Kidney (tissue), 22 donors: ENCODE measurements at regions of chr15 and their contacts with region 1.

Region 1: DNA sequence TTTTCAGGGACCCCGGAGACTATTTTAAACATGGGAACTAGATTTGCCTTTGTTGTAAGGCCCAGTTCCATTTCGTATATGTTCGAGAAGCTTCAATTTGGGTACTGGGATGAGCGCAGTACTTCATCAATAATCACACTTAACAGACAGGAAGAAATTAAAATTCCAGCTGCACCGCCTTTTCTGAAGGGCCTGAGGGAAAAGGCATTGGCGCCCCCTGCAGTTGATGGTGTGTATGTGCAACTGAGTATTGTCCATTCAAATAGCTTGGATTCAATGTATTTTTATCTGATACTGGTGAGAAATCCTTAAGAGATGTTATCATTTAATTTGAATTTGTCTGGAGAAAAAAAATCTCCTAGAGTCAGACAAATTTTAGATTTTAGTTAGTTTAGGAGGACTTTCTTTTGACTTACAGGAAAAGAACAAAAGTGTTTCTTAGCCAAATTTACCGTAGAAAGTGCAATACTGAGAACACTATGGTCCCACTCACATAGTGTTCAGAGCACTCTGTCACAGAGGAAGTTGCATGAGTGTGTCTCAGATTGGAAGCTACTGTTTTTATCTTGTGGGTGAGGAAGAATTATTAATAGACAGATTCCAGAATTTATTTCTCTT is 5.4 kb upstream of the ALDH1A2 start:
- DNase-seq: peak; percentile 66 to 89 (median 73)
- H3K4me3 ChIP-seq: no peak overlapping the region
- H3K27ac ChIP-seq: no peak overlapping the region
- H3K4me1 ChIP-seq: peaks cover 0 to 2% (median 0%) of the 10 kb centered on the region in 3 donors
- H3K27me3 ChIP-seq: no peaks in the 10 kb centered on the region
- CTCF ChIP-seq: peak; percentile 83

Region 2: GRCh38 chr15:57647791-57648130 is 423.1 kb before region 1 on chr15:
- intact Hi-C with region 1: no loop called
- DNase-seq: peak; percentile 65 to 88 (median 67)
- H3K4me3 ChIP-seq: no peak overlapping the region
- H3K27ac ChIP-seq: peak overlapping the region; percentile 29 to 37
- H3K4me1 ChIP-seq: peaks cover 3 to 8% (median 5%) of the 10 kb centered on the region in 3 donors
- H3K27me3 ChIP-seq: no peaks in the 10 kb centered on the region
- CTCF ChIP-seq: no peak

Region 3: DNA sequence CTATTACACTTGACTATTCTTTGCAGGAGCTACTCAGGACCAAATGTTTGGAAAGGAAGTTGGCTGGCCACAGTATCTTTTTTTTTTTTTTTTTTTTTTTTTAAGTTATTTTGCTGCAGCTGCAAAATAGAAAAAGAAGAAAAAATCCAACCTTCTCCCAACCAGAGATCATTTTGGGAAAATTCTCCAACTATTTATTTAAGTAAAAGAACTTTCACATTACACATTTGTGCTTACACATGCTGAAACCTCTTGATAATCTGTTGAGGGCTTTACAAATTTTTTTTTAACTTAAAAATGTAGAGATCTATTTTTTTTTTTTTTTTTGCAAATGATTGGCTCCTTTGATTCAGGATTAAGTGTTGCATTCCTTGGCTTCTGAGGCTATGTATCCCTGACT is 216.4 kb before region 1 on chr15:
- intact Hi-C with region 1: no loop called
- DNase-seq: no peak
- H3K4me3 ChIP-seq: no peak overlapping the region
- H3K27ac ChIP-seq: no peak overlapping the region
- H3K4me1 ChIP-seq: no peaks in the 10 kb centered on the region
- H3K27me3 ChIP-seq: no peaks in the 10 kb centered on the region
- CTCF ChIP-seq: no peak

Region 4: GRCh38 chr15:57866149-57866736 is 204.7 kb before region 1 on chr15:
- intact Hi-C with region 1: loop called (anchors 10 kb)
- DNase-seq: peak in 4 of 5 donors; percentile 29 to 79 (median 62)
- H3K4me3 ChIP-seq: no peak overlapping the region
- H3K27ac ChIP-seq: no peak overlapping the region
- H3K4me1 ChIP-seq: no peaks in the 10 kb centered on the region
- H3K27me3 ChIP-seq: no peaks in the 10 kb centered on the region
- CTCF ChIP-seq: peak; percentile 58

Region 5: DNA sequence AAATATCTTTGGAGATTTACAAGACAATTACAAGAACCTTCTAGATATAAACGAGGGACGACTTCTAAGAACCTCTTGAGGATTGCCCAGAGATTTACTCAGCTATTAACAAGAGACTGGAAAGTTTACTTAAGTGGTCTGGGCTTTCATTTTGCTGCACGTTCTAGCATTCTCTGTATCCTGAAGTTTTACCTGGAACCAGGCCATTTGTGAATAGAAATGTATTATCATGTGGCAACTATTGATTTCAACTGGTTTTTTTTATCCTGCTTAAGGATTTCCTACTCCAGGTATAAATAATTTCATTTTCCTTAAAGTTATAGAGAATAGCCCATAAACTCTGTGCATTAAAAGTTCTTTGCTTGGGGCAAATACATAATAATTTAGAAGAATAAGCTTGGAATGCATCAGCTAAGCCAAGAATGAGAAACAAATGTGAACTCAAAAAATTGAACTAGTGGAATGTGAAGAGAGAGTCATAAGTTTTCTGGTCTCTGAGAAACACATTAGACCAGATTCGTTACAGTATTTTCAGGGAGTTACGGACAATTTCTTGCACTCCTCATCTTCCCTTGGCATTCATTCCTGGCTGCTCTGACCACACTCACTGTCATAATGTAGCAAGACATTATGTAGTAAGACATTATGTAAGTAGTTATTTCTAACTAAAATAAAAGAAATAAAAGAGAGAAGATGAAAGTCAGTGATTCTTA is 68.5 kb after region 1 on chr15:
- intact Hi-C with region 1: loop called (anchors 10 kb)
- DNase-seq: no peak
- H3K4me3 ChIP-seq: no peak overlapping the region
- H3K27ac ChIP-seq: no peak overlapping the region
- H3K4me1 ChIP-seq: no peaks in the 10 kb centered on the region
- H3K27me3 ChIP-seq: no peaks in the 10 kb centered on the region
- CTCF ChIP-seq: no peak

Region 6: GRCh38 chr15:58182460-58183163 is 111.7 kb after region 1 on chr15:
- intact Hi-C with region 1: loop called (anchors 5 kb)
- DNase-seq: peak; percentile 64 to 75 (median 69)
- H3K4me3 ChIP-seq: no peak overlapping the region
- H3K27ac ChIP-seq: no peak overlapping the region
- H3K4me1 ChIP-seq: no peaks in the 10 kb centered on the region
- H3K27me3 ChIP-seq: no peaks in the 10 kb centered on the region
- CTCF ChIP-seq: peak; percentile 79